ENCODE measurements at regions of chr3 and their contacts with region 1.

Region 1: GRCh38 chr3:149717391-149718056 is 34.8 kb downstream of the COMMD2 start:
- DNase-seq: peak; percentile 30 to 49 (median 38)
- ATAC-seq: peak; percentile 75
- H3K4me3 ChIP-seq: no peak overlapping the region
- H3K27ac ChIP-seq: no peak overlapping the region
- H3K4me1 ChIP-seq: peaks cover 0 to 11% of the 10 kb centered on the region in 2 experiments; a peak in 1 of 5 replicates
- H3K27me3 ChIP-seq: peaks cover 0 to 23% of the 10 kb centered on the region in 2 experiments; a peak in 2 of 5 replicates
- CTCF ChIP-seq: peak; percentile 56 to 72 (median 57); a peak in 4 of 6 replicates
- EP300 ChIP-seq: no peak
- POLR2A ChIP-seq: no peak
- RAD21 ChIP-seq: peak; percentile 63 to 77

Region 2: GRCh38 chr3:149512209-149512782 is 205.2 kb before region 1 on chr3:
- CTCF ChIA-PET with region 1: no interaction called
- POLR2A ChIA-PET with region 1: no interaction called
- in situ Hi-C with region 1: no loop called
- intact Hi-C with region 1: loop called (anchors 1 kb)
- DNase-seq: peak; percentile 53 to 63 (median 58)
- ATAC-seq: peak; percentile 97
- H3K4me3 ChIP-seq: no peak overlapping the region
- H3K27ac ChIP-seq: no peak overlapping the region
- H3K4me1 ChIP-seq: no peaks in the 10 kb centered on the region
- H3K27me3 ChIP-seq: peaks cover 3 to 16% of the 10 kb centered on the region in 2 experiments; a peak in 4 of 5 replicates
- CTCF ChIP-seq: peak; percentile 75 to 76 (median 75)
- EP300 ChIP-seq: no peak
- POLR2A ChIP-seq: no peak
- RAD21 ChIP-seq: peak; percentile 61 to 71

Region 3: GRCh38 chr3:149527531-149528339 is 189.8 kb before region 1 on chr3:
- CTCF ChIA-PET with region 1: no interaction called
- POLR2A ChIA-PET with region 1: no interaction called
- in situ Hi-C with region 1: loop called (anchors 5 kb)
- intact Hi-C with region 1: loop called (anchors 1 kb)
- DNase-seq: no peak
- ATAC-seq: no peak
- H3K4me3 ChIP-seq: no peak overlapping the region
- H3K27ac ChIP-seq: no peak overlapping the region
- H3K4me1 ChIP-seq: no peaks in the 10 kb centered on the region
- H3K27me3 ChIP-seq: peaks cover 4 to 12% of the 10 kb centered on the region in 2 experiments; a peak in 2 of 5 replicates
- CTCF ChIP-seq: peak in 1 of 3 experiments; percentile 10; a peak in 1 of 6 replicates
- EP300 ChIP-seq: no peak
- POLR2A ChIP-seq: no peak
- RAD21 ChIP-seq: peak in 1 of 2 experiments; percentile 20; a peak in 1 of 4 replicates

Region 4: DNA sequence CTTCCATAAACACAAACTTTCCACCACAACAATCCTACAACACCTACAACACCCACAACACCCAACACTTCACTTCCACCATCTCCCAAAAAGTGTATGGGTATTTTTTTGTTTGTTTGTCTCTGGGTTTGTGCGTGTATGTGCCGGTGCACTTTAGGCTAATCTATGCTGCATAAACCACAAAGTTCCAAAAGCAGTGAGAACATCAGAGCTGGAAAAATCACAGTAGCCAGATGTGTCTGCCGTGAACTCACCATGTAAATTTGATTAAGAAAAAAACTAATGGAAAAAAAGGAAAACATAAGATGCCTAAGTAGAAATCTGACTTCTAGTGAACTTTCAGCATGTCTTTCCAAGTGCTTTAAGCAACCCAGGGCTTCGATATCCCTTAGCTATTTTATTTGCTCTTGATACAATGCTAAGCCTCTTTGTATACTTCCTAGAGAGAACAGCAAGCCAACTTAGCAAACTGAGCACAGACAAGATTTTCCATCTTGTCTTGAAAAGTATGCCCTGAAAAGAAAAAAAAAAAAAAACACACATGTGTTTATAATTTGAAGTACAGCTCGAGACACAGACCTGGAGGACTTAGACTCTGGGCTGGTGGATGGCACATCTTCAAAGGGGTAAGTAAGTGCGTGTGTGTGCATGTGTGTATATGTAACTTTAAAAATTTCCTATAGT is 151.1 kb before region 1 on chr3:
- CTCF ChIA-PET with region 1: interaction called, 11 read pairs
- POLR2A ChIA-PET with region 1: no interaction called
- in situ Hi-C with region 1: no loop called
- intact Hi-C with region 1: loop called (anchors 5 kb)
- DNase-seq: no peak
- ATAC-seq: no peak
- H3K4me3 ChIP-seq: no peak overlapping the region
- H3K27ac ChIP-seq: no peak overlapping the region
- H3K4me1 ChIP-seq: peaks cover 0 to 3% of the 10 kb centered on the region in 2 experiments; a peak in 1 of 5 replicates
- H3K27me3 ChIP-seq: peaks cover 2% of the 10 kb centered on the region in 2 experiments; a peak in 2 of 5 replicates
- CTCF ChIP-seq: no peak
- EP300 ChIP-seq: no peak
- POLR2A ChIP-seq: no peak
- RAD21 ChIP-seq: no peak